CD14-positive monocyte (primary cell): ENCODE measurements at regions of chr16 and their contacts with region 1.

Region 1: GRCh38 chr16:10871149-10871991 is 5.6 kb upstream of the CIITA start:
- DNase-seq: peak; percentile 85 to 95 (median 89)
- H3K4me3 ChIP-seq: peak overlapping the region in 1 of 3 experiments; percentile 40
- H3K4me3 Mint-ChIP-seq: peak overlapping the region in 1 of 2 donors; percentile 64
- H3K27ac ChIP-seq: peak overlapping the region; percentile 73 to 86
- H3K27ac Mint-ChIP-seq: peak overlapping the region; percentile 92 to 95 (median 94)
- H3K4me1 ChIP-seq: peaks cover 82 to 83% of the 10 kb centered on the region in 2 donors
- H3K4me1 Mint-ChIP-seq: peaks cover 87% of the 10 kb centered on the region
- H3K27me3 ChIP-seq: no peaks in the 10 kb centered on the region
- H3K27me3 Mint-ChIP-seq: peaks cover 0 to 2% (median 0%) of the 10 kb centered on the region in 3 donors
- CTCF ChIP-seq: no peak

Region 2: GRCh38 chr16:10625593-10626273 is 245.6 kb before region 1 on chr16:
- intact Hi-C with region 1: loop called in 1 of 2 experiments (anchors 10 kb)
- DNase-seq: peak; percentile 55 to 83 (median 82)
- H3K4me3 ChIP-seq: no peak overlapping the region
- H3K4me3 Mint-ChIP-seq: no peak overlapping the region
- H3K27ac ChIP-seq: peak overlapping the region in 1 of 2 donors; percentile 58
- H3K27ac Mint-ChIP-seq: peak overlapping the region; percentile 33 to 87 (median 75)
- H3K4me1 ChIP-seq: peaks cover 54 to 68% of the 10 kb centered on the region in 2 donors
- H3K4me1 Mint-ChIP-seq: peaks cover 53% of the 10 kb centered on the region
- H3K27me3 ChIP-seq: no peaks in the 10 kb centered on the region
- H3K27me3 Mint-ChIP-seq: peaks cover 0 to 2% (median 0%) of the 10 kb centered on the region in 3 donors
- CTCF ChIP-seq: no peak

Region 3: GRCh38 chr16:10806698-10807097 is 64.7 kb before region 1 on chr16:
- intact Hi-C with region 1: loop called in 1 of 2 experiments (anchors 5 kb)
- DNase-seq: peak; percentile 74 to 86 (median 84)
- H3K4me3 ChIP-seq: peak overlapping the region in 1 of 3 experiments; percentile 47
- H3K4me3 Mint-ChIP-seq: peak overlapping the region in 1 of 2 donors; percentile 57
- H3K27ac ChIP-seq: peak overlapping the region; percentile 69 to 81
- H3K27ac Mint-ChIP-seq: peak overlapping the region; percentile 92 to 98 (median 97)
- H3K4me1 ChIP-seq: peaks cover 34 to 35% of the 10 kb centered on the region in 2 donors
- H3K4me1 Mint-ChIP-seq: peaks cover 37% of the 10 kb centered on the region
- H3K27me3 ChIP-seq: no peaks in the 10 kb centered on the region
- H3K27me3 Mint-ChIP-seq: no peaks in the 10 kb centered on the region
- CTCF ChIP-seq: no peak